Upper lobe of right lung (tissue), 1 donor: ENCODE measurements at regions of chr17 and their contacts with region 1.

Region 1: GRCh38 chr17:36629252-36629847 is 28.0 kb downstream of the MRM1 start:
- DNase-seq: peak; percentile 82
- ATAC-seq: peak; percentile 95
- H3K4me3 ChIP-seq: no peak overlapping the region
- H3K27ac ChIP-seq: no peak overlapping the region
- H3K4me1 ChIP-seq: no peaks in the 10 kb centered on the region
- H3K27me3 ChIP-seq: peaks cover 6% of the 10 kb centered on the region
- CTCF ChIP-seq: peak; percentile 99

Region 2: GRCh38 chr17:36869856-36870719 is 240.7 kb after region 1 on chr17:
- intact Hi-C with region 1: no loop called
- DNase-seq: no peak
- ATAC-seq: no peak
- H3K4me3 ChIP-seq: no peak overlapping the region
- H3K27ac ChIP-seq: no peak overlapping the region
- H3K4me1 ChIP-seq: no peaks in the 10 kb centered on the region
- H3K27me3 ChIP-seq: peaks cover 5% of the 10 kb centered on the region
- CTCF ChIP-seq: no peak

Region 3: GRCh38 chr17:37047631-37048104 is 418.3 kb after region 1 on chr17:
- intact Hi-C with region 1: loop called (anchors 10 kb)
- DNase-seq: peak; percentile 83
- ATAC-seq: peak; percentile 88
- H3K4me3 ChIP-seq: no peak overlapping the region
- H3K27ac ChIP-seq: no peak overlapping the region
- H3K4me1 ChIP-seq: no peaks in the 10 kb centered on the region
- H3K27me3 ChIP-seq: no peaks in the 10 kb centered on the region
- CTCF ChIP-seq: peak; percentile 88